K562 (cell line): ENCODE measurements at regions of chr15 and their contacts with region 1.

Region 1: GRCh38 chr15:45457641-45458433 is 64.7 kb downstream of the SLC30A4 start:
- DNase-seq: peak; percentile 67 to 84 (median 78)
- ATAC-seq: peak; percentile 87
- H3K4me3 ChIP-seq: peak overlapping the region; percentile 19
- H3K27ac ChIP-seq: 0 out of 3 replicates have a peak overlapping the region, but pooled peaks have one; percentile 24
- H3K4me1 ChIP-seq: peaks cover 6 to 9% of the 10 kb centered on the region in 2 experiments; a peak in 4 of 5 replicates
- H3K27me3 ChIP-seq: peaks cover 0 to 4% of the 10 kb centered on the region in 2 experiments; a peak in 2 of 5 replicates
- CTCF ChIP-seq: peak; percentile 74 to 91 (median 82)
- EP300 ChIP-seq: 0 out of 2 replicates have a peak, but pooled peaks have one; percentile 3
- POLR2A ChIP-seq: no peak
- RAD21 ChIP-seq: peak; percentile 83 to 86

Region 2: GRCh38 chr15:44753345-44753744 is 704.5 kb before region 1 on chr15:
- CTCF ChIA-PET with region 1: no interaction called
- POLR2A ChIA-PET with region 1: no interaction called
- in situ Hi-C with region 1: no loop called
- intact Hi-C with region 1: no loop called
- DNase-seq: no peak
- ATAC-seq: no peak
- H3K4me3 ChIP-seq: no peak overlapping the region
- H3K27ac ChIP-seq: no peak overlapping the region
- H3K4me1 ChIP-seq: no peaks in the 10 kb centered on the region
- H3K27me3 ChIP-seq: no peaks in the 10 kb centered on the region; a peak in 1 of 5 replicates
- CTCF ChIP-seq: no peak
- EP300 ChIP-seq: no peak
- POLR2A ChIP-seq: no peak
- RAD21 ChIP-seq: no peak

Region 3: DNA sequence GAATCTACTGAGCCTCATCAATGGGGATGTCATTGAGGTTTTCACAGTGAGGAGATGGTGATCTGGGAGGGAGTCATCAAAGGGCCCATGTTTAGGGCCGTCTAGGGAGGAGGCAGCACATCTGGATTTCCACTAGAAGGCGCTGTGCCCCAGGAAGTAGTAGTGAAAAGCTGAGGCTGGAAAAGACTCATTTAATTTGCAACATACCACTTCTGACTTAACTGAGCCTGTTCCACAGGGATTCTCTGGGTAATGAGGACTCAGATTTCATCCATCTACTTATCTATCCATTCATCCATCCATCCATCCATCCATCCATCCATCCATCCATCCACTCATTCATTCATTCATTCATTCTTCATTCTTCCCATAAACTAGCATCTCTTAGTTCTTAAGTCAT is 252.6 kb before region 1 on chr15:
- CTCF ChIA-PET with region 1: interaction called, 33 read pairs
- POLR2A ChIA-PET with region 1: no interaction called
- in situ Hi-C with region 1: loop called (anchors 5 kb)
- intact Hi-C with region 1: loop called (anchors 1 kb)
- DNase-seq: peak; percentile 45 to 79 (median 62)
- ATAC-seq: peak; percentile 68
- H3K4me3 ChIP-seq: no peak overlapping the region
- H3K27ac ChIP-seq: no peak overlapping the region
- H3K4me1 ChIP-seq: peaks cover 0 to 2% of the 10 kb centered on the region in 2 experiments; a peak in 2 of 5 replicates
- H3K27me3 ChIP-seq: peaks cover 2 to 4% of the 10 kb centered on the region in 2 experiments; a peak in 1 of 5 replicates
- CTCF ChIP-seq: peak; percentile 89 to 97 (median 95)
- EP300 ChIP-seq: no peak
- POLR2A ChIP-seq: no peak
- RAD21 ChIP-seq: peak; percentile 70 to 86

Region 4: DNA sequence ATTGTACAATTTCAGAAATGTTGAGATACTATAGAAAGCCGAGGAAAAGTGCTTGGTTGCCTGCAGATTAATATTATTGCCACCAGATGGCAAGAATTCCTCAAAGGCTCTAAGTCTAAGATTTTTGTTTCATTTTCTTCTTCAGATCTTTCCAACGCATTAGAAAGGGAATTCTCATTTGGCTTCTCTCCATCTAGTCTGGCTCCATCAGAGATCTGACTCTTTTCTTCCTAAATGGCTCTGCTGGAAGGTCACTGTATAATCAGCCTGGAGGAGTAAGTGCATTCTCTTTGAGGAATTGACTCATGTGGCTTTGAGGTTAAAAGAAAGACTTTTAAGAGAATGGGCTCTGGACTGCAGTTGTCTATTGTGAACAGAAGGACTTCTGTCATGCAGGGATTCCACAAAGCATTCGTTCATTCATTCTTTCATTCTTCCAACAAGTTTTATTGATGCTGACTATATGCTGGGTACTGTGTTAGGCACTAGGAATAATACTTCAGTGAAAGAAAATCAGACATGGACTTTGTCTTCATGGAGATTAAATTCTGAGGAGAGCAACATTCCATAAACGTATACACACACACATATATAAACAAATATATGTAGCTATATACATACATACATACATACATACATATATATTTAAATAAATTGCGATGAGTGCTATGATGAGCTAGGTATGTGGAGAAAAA is 150.5 kb before region 1 on chr15:
- CTCF ChIA-PET with region 1: interaction called, 15 read pairs
- POLR2A ChIA-PET with region 1: no interaction called
- in situ Hi-C with region 1: no loop called
- intact Hi-C with region 1: loop called (anchors 5 kb)
- DNase-seq: peak in 1 of 4 experiments; percentile 6
- ATAC-seq: peak; percentile 39; the same call in 1 of the 3 replicates
- H3K4me3 ChIP-seq: no peak overlapping the region
- H3K27ac ChIP-seq: no peak overlapping the region
- H3K4me1 ChIP-seq: no peaks in the 10 kb centered on the region
- H3K27me3 ChIP-seq: peaks cover 0 to 3% of the 10 kb centered on the region in 2 experiments; a peak in 4 of 5 replicates
- CTCF ChIP-seq: peak; percentile 23 to 53 (median 34); a peak in 3 of 6 replicates
- EP300 ChIP-seq: no peak
- POLR2A ChIP-seq: no peak
- RAD21 ChIP-seq: peak; percentile 40 to 60

Region 5: DNA sequence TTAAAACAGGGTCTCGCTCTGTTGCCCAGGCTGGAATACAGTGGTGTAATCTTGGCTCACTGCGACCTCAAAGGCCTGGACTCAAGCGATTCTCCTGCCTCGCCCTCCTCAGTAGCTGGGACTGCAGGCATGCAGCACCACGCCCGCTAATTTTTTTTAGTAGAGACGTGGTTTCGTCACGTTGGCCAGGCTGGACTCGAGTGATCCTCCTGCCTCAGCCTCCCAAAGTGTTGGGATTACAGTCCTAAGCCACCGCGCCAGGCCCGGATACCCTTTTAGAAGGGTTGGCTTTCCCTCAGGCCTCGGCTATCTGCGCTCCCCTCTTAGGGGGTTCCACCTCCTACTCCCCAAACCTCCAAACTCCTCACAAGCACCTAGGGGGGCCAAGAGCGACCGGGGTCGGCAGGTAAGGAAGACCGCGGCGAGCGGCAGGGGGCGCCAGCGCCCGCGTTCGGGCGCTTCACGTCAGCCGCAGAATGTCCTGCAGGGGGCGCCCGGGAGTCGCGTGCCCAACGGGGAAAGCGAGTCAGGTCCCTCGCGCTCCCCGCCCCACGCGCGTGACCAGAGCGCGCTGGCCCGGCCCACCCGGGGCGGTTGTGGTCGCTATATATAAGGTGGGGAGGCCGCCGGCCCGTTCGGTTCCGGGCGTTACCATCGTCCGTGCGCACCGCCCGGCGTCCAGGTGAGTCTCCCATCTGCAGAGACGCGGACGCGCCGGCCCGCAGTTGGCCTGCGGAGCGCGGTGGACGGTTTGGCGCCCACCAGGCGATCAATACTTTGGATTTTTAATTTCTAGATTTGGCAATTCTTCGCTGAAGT is 27.7 kb before region 1 on chr15:
- CTCF ChIA-PET with region 1: interaction called, 112 read pairs
- POLR2A ChIA-PET with region 1: no interaction called
- in situ Hi-C with region 1: no loop called
- intact Hi-C with region 1: loop called (anchors 1 kb)
- DNase-seq: peak; percentile 66 to 77 (median 72)
- ATAC-seq: peak; percentile 94
- H3K4me3 ChIP-seq: no peak overlapping the region
- H3K27ac ChIP-seq: no peak overlapping the region
- H3K4me1 ChIP-seq: peaks cover 0 to 8% of the 10 kb centered on the region in 2 experiments; a peak in 2 of 5 replicates
- H3K27me3 ChIP-seq: no peaks in the 10 kb centered on the region; a peak in 1 of 5 replicates
- CTCF ChIP-seq: peak; percentile 96 to 100 (median 99)
- EP300 ChIP-seq: no peak
- POLR2A ChIP-seq: no peak
- RAD21 ChIP-seq: peak; percentile 60 to 81

Region 6: GRCh38 chr15:45499426-45499825 is 41.6 kb after region 1 on chr15:
- CTCF ChIA-PET with region 1: no interaction called
- POLR2A ChIA-PET with region 1: no interaction called
- in situ Hi-C with region 1: no loop called
- intact Hi-C with region 1: no loop called
- DNase-seq: no peak
- ATAC-seq: no peak
- H3K4me3 ChIP-seq: no peak overlapping the region
- H3K27ac ChIP-seq: no peak overlapping the region
- H3K4me1 ChIP-seq: no peaks in the 10 kb centered on the region
- H3K27me3 ChIP-seq: peaks cover 0 to 5% of the 10 kb centered on the region in 2 experiments; a peak in 4 of 5 replicates
- CTCF ChIP-seq: no peak
- EP300 ChIP-seq: no peak
- POLR2A ChIP-seq: no peak
- RAD21 ChIP-seq: no peak

Region 7: GRCh38 chr15:45611305-45611704 is 153.5 kb after region 1 on chr15:
- CTCF ChIA-PET with region 1: interaction called, 168 read pairs
- POLR2A ChIA-PET with region 1: interaction called, 5 read pairs
- in situ Hi-C with region 1: loop called (anchors 5 kb)
- intact Hi-C with region 1: loop called (anchors 1 kb)
- DNase-seq: peak in 2 of 4 experiments; percentile 24 to 46
- ATAC-seq: peak; percentile 64
- H3K4me3 ChIP-seq: no peak overlapping the region
- H3K27ac ChIP-seq: no peak overlapping the region
- H3K4me1 ChIP-seq: no peaks in the 10 kb centered on the region
- H3K27me3 ChIP-seq: no peaks in the 10 kb centered on the region
- CTCF ChIP-seq: peak; percentile 35 to 76 (median 50); a peak in 5 of 6 replicates
- EP300 ChIP-seq: no peak
- POLR2A ChIP-seq: no peak
- RAD21 ChIP-seq: peak; percentile 61 to 73